CD14-positive monocyte (primary cell): ENCODE measurements at regions of chr5 and their contacts with region 1.

Region 1: DNA sequence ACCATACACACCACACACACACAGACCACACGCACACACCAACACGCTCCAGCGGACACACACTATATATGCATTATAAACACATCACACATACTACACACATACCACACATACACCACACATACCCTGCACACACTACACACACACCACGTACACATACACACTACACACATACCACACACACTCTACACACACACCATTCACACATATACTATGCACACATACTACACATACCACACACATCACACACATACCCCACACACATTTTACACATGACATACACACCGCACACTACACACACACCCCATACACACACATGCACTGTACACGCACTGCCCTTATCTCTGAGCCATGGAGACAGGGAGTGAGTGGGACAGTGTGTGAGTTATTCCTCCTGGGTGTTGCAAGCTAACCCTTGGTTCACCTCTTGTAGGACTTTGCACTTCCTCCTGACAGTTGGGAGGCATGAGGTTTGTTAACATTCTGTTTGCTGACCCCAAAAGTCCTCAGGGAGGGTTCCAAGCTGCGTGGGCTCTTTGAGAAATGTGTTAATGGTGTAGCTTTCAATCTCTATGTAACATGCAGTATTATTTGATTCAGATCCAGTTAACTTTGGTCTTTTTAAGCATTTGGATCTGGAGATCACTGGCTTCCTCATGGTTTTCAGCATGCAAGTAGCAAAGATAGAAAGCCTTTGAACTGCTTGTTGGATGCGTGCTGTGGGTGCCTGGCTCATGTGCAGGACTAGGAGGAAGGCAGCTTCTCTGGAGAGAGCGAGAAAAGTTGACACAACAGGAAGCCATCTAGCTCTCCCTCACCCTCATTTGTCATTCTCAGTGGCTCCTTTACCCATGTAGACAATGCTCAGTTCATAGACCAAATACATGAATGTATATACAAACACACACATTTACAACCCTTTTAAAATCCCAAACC is 13.7 kb downstream of the IL31RA start:
- DNase-seq: peak; percentile 67 to 72 (median 68)
- H3K4me3 ChIP-seq: peak overlapping the region in 1 of 3 experiments; percentile 16
- H3K4me3 Mint-ChIP-seq: no peak overlapping the region
- H3K27ac ChIP-seq: peak overlapping the region; percentile 39 to 76
- H3K27ac Mint-ChIP-seq: no peak overlapping the region
- H3K4me1 ChIP-seq: peaks cover 31 to 48% of the 10 kb centered on the region in 2 donors
- H3K4me1 Mint-ChIP-seq: peaks cover 23% of the 10 kb centered on the region
- H3K27me3 ChIP-seq: no peaks in the 10 kb centered on the region
- H3K27me3 Mint-ChIP-seq: peaks cover 0 to 2% (median 0%) of the 10 kb centered on the region in 3 donors
- CTCF ChIP-seq: no peak

Region 2: DNA sequence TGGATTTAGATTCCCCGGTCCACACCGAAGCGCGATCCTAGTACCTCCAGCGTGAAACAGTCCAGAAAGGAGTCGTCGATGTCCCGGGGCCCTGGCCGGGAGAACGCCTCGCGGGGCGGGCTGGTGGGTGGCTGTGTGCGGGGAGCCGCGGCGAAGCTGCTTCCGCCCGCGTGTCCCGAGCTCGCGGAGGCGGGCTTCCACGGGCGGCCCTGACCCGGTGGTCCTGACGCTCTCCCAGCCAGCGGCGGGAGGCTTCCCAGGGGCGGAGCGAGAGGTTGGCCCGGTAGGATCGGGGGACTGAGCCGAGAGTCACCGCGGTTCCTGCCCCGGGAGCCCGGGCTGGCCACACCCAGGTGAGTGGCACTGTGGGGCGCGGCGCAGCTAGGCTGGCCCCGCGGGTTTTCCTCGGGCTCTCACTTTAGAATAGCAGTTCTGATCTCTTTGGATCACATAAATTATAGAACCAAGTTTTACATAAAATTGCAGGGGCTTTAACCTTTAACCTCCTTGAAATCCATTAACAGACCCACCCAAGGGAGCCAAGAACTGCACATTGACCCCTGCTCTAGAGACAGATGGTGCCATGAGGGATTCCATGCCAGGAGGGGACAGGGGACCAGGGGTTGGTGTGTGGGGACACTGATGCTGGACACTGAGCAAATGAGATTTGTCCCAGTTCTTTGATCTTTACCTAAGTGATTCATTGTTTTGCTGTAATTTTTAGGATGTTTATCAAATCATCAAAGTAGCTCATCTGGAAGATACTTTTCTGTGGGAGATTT is 43.0 kb before region 1 on chr5:
- intact Hi-C with region 1: loop called in 1 of 2 experiments (anchors 10 kb)
- DNase-seq: peak in 2 of 3 donors; percentile 5 to 10
- H3K4me3 ChIP-seq: peak overlapping the region; percentile 34 to 69 (median 36)
- H3K4me3 Mint-ChIP-seq: peak overlapping the region; percentile 70 to 88
- H3K27ac ChIP-seq: no peak overlapping the region
- H3K27ac Mint-ChIP-seq: peak overlapping the region in 4 of 7 donors; percentile 3 to 33 (median 12)
- H3K4me1 ChIP-seq: peaks cover 9 to 11% of the 10 kb centered on the region in 2 donors
- H3K4me1 Mint-ChIP-seq: peaks cover 15% of the 10 kb centered on the region
- H3K27me3 ChIP-seq: peaks cover 34 to 37% of the 10 kb centered on the region in 2 donors
- H3K27me3 Mint-ChIP-seq: peaks cover 28 to 34% (median 30%) of the 10 kb centered on the region in 3 donors
- CTCF ChIP-seq: no peak